ENCODE measurements at regions of chr7 and their contacts with region 1.

Region 1: GRCh38 chr7:28551331-28551730 is 139.0 kb downstream of the CREB5 start:
- DNase-seq: no peak
- H3K4me3 ChIP-seq: no peak overlapping the region
- H3K27ac ChIP-seq: no peak overlapping the region
- H3K27me3 ChIP-seq: no peaks in the 10 kb centered on the region
- CTCF ChIP-seq: no peak

Region 2: GRCh38 chr7:28536259-28536658 is 15.1 kb before region 1 on chr7:
- CTCF ChIA-PET with region 1: interaction called, 12 read pairs
- POLR2A ChIA-PET with region 1: no interaction called
- DNase-seq: no peak
- H3K4me3 ChIP-seq: no peak overlapping the region
- H3K27ac ChIP-seq: no peak overlapping the region
- H3K27me3 ChIP-seq: no peaks in the 10 kb centered on the region
- CTCF ChIP-seq: peak; percentile 67

Region 3: GRCh38 chr7:29017713-29018112 is 466.4 kb after region 1 on chr7:
- CTCF ChIA-PET with region 1: no interaction called
- POLR2A ChIA-PET with region 1: no interaction called
- DNase-seq: no peak
- H3K4me3 ChIP-seq: no peak overlapping the region
- H3K27ac ChIP-seq: no peak overlapping the region
- H3K27me3 ChIP-seq: peaks cover 4% of the 10 kb centered on the region
- CTCF ChIP-seq: no peak